Panc1 (cell line): ENCODE measurements at regions of chr14 and their contacts with region 1.

Region 1: GRCh38 chr14:75660238-75660629 is 442 bp downstream of the ERG28 start:
- DNase-seq: no peak
- ATAC-seq: no peak
- H3K4me3 ChIP-seq: peak overlapping the region; percentile 94 to 97
- H3K27ac ChIP-seq: peak overlapping the region; percentile 89
- H3K4me1 ChIP-seq: peaks cover 5% of the 10 kb centered on the region; the same call in 1 of the 2 replicates
- H3K27me3 ChIP-seq: no peaks in the 10 kb centered on the region
- CTCF ChIP-seq: no peak

Region 2: DNA sequence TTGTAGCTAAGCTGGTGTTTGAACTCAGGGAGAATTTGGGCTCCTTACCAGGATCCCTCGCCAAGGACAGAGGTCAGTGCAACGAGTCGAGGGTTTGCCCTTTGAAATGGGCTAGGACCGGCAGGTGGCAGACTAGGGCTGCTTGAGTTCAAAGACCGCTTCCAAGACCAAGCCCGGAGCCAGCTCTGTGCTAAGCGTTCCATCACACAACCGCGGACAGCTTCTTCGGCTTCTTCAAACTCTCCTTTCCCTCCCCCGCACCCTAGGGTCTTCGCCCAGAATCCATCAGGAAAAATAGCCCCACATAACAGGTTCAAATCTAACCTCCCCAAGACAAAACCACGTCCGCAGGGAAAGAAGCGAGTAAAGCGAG is 82.5 kb before region 1 on chr14:
- CTCF ChIA-PET with region 1: interaction called, 18 read pairs
- POLR2A ChIA-PET with region 1: no interaction called
- in situ Hi-C with region 1: no loop called
- intact Hi-C with region 1: loop called (anchors 2 kb)
- DNase-seq: peak; percentile 76
- ATAC-seq: peak; percentile 89
- H3K4me3 ChIP-seq: peak overlapping the region; percentile 58 to 85
- H3K27ac ChIP-seq: peak overlapping the region; percentile 42
- H3K4me1 ChIP-seq: peaks cover 5% of the 10 kb centered on the region; the same call in 1 of the 2 replicates
- H3K27me3 ChIP-seq: no peaks in the 10 kb centered on the region
- CTCF ChIP-seq: peak; percentile 81

Region 3: DNA sequence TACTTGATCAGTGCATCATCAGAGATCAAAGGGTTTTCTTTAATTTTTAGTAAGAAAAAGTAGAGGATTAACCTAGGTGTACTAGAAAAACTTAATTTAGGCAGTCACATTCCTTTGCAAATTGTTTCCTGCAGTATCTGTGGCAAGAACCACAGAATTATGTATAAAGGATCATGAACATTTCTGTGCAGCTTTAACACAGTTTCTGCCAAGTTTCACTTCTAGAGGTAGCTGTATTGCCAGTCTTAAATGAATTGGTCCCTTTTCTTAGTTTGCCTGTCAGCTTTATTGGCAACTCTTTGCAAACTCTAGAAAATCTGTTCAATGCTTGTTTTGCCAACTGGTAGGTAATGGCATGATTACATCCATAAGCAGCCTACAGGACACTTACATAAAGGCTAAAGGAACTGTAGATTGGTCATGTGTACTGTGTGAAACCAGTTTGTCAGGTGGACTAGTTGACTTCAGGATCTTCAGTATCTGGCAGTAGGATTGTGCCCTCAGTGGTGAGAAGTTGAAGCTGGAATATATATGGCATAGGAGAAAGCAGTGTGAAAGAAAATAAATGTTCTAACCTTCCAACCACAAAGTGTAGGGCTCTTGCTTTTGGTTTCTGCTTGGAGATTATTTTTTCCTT is 76.7 kb after region 1 on chr14:
- CTCF ChIA-PET with region 1: no interaction called
- POLR2A ChIA-PET with region 1: no interaction called
- in situ Hi-C with region 1: no loop called
- intact Hi-C with region 1: no loop called
- DNase-seq: no peak
- ATAC-seq: no peak
- H3K4me3 ChIP-seq: no peak overlapping the region
- H3K27ac ChIP-seq: no peak overlapping the region
- H3K4me1 ChIP-seq: no peaks in the 10 kb centered on the region
- H3K27me3 ChIP-seq: no peaks in the 10 kb centered on the region
- CTCF ChIP-seq: no peak

Region 4: DNA sequence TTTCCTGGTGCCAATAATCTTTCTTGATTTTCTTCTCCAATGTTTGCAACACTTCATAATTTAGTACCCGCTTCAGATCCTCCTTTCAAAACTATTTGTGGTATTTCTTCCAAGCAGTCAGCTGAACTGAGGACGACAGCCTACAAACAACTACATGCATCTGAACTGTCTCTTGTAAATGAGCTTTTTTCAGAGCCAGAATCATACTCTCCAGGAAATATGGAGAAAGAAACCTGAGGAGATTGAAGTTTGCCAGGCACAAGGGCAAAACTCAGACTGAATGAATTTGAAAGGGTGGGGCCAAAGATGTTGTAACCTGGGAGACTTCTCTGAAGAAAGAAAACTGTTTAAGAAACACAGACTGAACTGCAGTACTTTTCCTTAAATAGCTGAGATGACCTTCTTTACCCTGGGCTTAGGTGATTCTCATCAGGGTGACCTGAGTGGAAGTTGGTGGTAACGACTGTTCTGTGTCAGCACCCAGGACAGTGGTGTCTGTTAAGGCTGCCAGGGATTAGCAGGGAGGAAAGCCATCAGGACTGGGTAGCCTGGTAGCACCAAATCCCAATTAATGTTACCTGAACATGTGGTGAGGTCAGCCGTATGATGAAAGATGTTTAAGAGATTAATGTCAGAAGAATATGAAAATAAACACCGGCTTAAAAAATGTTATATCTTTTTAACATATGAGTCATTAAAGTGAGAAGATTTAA is 226.6 kb after region 1 on chr14:
- CTCF ChIA-PET with region 1: no interaction called
- POLR2A ChIA-PET with region 1: interaction called, 10 read pairs
- in situ Hi-C with region 1: no loop called
- intact Hi-C with region 1: no loop called
- DNase-seq: no peak
- ATAC-seq: no peak
- H3K4me3 ChIP-seq: no peak overlapping the region
- H3K27ac ChIP-seq: no peak overlapping the region
- H3K4me1 ChIP-seq: no peaks in the 10 kb centered on the region
- H3K27me3 ChIP-seq: no peaks in the 10 kb centered on the region
- CTCF ChIP-seq: no peak